ENCODE measurements at regions of chr3 and their contacts with region 1.

Region 1: DNA sequence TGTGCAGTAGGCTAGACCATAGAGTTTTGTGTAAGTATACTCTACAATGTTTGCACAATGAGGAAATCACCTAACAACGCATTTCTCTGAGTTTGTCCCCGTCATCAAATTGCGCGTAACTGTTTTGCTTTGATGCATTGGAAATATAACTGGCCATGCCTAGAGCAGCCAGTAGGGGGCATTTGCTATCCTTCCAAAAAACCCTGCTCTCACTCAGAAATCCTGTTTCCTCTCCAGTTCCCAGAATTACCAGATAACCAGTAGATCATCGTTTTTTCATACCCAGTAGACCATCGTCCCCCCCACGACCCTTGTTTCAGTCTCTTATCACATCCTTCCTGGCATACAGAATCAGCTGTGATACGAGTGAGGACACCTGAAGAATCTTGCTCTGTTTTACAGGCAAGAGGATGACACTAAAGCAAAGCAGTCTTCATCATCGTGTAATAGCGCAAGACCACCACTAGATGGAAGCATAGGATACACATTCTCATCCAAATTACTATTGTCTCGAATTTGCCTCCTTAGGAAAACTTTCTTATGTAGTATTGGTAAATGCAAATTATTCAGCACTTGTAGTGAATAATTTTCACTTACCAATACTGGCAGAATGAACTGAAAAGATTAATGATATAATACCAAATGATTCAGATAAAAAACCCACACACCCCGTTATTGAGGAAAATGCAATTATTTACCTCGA is 4.4 kb upstream of the GABRR3 start:
- DNase-seq: peak; percentile 85
- ATAC-seq: peak; percentile 98
- H3K4me3 Mint-ChIP-seq: peak overlapping the region; percentile 73
- H3K27ac Mint-ChIP-seq: peak overlapping the region; percentile 79
- H3K4me1 Mint-ChIP-seq: peaks cover 9% of the 10 kb centered on the region
- H3K27me3 Mint-ChIP-seq: peaks cover 34% of the 10 kb centered on the region

Region 2: GRCh38 chr3:97636465-97636864 is 403.0 kb before region 1 on chr3:
- CTCF ChIA-PET with region 1: no interaction called
- POLR2A ChIA-PET with region 1: no interaction called
- DNase-seq: no peak
- ATAC-seq: no peak
- H3K4me3 Mint-ChIP-seq: no peak overlapping the region
- H3K27ac Mint-ChIP-seq: no peak overlapping the region
- H3K4me1 Mint-ChIP-seq: no peaks in the 10 kb centered on the region
- H3K27me3 Mint-ChIP-seq: no peaks in the 10 kb centered on the region

Region 3: DNA sequence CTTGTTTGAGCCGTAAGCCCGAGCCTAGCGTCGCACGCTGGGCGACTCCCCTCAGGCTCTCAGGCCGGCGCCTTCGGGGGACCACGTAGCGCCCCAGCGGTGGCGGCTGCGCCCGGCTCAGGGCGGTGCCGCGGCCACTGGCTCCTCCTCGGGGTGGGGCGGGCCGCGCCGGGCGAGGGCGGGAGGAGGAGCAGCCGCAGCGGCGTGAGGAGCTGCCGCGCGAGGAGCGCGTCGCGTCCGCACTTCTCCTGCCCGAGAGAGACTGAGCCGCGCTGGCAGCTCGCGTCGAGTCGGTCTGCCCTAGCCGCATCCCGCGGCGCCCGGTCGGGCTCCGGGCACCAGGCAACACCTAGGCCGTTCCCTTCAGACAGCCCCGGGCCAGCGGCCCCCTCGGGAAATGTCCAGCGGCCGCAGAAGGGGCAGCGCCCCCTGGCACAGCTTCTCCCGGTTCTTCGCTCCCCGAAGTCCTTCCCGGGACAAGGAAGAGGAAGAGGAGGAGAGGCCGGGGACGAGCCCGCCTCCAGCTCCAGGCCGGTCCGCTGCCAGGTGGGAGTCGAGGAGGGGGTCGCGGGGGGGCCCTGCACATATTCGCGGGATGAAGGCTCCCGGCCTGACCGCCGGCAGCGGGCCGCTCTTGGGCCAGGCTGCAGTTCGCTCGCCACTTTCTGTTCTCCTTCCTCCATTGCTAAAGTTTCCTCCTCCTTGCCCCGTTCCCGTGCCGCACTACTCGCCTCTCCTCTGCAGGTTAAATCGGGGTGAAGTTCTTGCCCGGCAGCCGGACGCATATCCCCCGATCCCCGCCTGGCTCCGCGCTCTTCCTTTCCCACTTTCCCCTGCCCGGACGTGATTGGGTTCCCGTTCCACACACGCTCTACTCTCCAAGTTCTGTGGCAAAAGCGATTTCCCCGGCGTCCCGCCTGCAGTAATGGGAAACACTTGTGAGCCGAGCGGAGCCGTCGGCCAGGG is 217.4 kb before region 1 on chr3 and contains the start of gene CRYBG3:
- CTCF ChIA-PET with region 1: interaction called, 10 read pairs
- POLR2A ChIA-PET with region 1: no interaction called
- DNase-seq: peak; percentile 85
- ATAC-seq: peak; percentile 99
- H3K4me3 Mint-ChIP-seq: peak within 1 kb of the TSS; percentile 84
- H3K27ac Mint-ChIP-seq: peak within 1 kb of the TSS; percentile 79
- H3K4me1 Mint-ChIP-seq: peaks cover 19% of the 10 kb centered on the region
- H3K27me3 Mint-ChIP-seq: peaks cover 37% of the 10 kb centered on the region
- total RNA-seq, gene CRYBG3: 1.6 to 1.8 TPM

Region 4: DNA sequence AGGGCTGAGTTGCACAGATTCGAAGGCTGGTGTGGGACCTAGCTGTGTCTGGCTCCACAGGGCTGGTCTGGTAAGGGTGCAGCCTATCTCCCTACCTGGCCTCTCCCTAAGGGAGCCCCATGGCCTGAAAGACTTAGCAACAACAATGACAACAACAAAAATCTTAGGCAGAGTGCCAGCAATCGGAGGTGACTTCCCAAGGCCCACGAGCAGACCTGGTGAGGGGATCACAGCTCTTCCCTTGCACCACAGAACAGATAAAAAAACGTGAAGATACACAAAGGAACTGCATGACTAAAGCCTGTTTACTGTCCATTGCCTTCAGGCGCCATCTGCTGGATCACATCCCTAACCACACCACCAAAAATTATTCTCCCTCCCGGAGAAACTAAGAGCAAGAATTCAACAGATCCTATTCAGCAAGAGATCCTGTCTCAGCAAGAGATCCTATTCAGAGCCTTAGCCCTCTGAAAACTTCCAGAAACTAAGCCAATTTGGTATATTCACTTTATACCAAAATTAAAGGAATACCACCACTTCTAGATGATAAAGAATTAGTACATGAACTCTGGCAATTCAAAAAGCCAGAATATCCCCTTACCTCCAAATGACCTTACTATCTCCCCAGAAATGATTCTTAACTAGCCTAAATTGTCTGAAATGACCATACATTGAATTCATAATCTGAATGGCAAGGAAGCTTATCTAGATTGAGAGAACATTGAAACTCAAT is 290.1 kb after region 1 on chr3:
- CTCF ChIA-PET with region 1: interaction called, 50 read pairs
- POLR2A ChIA-PET with region 1: no interaction called
- DNase-seq: peak; percentile 66
- ATAC-seq: peak; percentile 86
- H3K4me3 Mint-ChIP-seq: no peak overlapping the region
- H3K27ac Mint-ChIP-seq: no peak overlapping the region
- H3K4me1 Mint-ChIP-seq: peaks cover 15% of the 10 kb centered on the region
- H3K27me3 Mint-ChIP-seq: peaks cover 57% of the 10 kb centered on the region

Region 5: DNA sequence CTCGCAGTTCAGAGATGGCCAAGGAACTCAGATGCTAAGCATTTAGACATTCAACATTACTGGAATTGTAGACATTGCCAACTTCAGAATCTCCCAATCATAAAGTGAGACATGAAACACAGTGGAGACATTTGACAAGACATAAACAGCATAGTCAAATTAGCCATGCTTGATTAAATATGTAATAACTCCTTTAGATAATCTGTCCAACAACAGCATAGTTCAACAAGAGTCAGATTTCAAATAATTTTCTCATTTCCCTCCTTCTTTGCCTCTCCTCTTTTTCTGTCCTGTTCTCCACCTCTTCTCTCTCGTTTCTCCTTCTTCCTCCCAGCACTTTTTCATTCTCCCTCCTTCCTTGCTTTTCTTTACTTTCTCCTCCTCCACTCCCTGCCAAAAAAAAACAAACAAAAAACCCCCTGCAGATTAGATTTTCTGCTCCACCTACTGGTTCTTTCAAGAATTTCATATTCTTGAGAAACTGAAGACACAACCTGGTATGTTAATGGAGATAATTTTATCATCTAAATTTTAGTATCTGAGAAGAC is 533.8 kb after region 1 on chr3:
- CTCF ChIA-PET with region 1: interaction called, 14 read pairs
- POLR2A ChIA-PET with region 1: no interaction called
- DNase-seq: no peak
- ATAC-seq: peak; percentile 59
- H3K4me3 Mint-ChIP-seq: peak overlapping the region; percentile 32
- H3K27ac Mint-ChIP-seq: peak overlapping the region; percentile 81
- H3K4me1 Mint-ChIP-seq: peaks cover 68% of the 10 kb centered on the region
- H3K27me3 Mint-ChIP-seq: no peaks in the 10 kb centered on the region

Measured in activated CD8-positive, alpha-beta T cell treated with anti-CD3 and anti-CD28 coated beads, Interleukin-2, amount 10 ng/mL, durations not matched to agents 7 days and 5 days (primary cell).